GM12878 (cell line): ENCODE measurements at regions of chr9 and their contacts with region 1.

Region 1: GRCh38 chr9:123997665-123998277 is 13.8 kb upstream of the LHX2 start:
- DNase-seq: peak; percentile 81
- ATAC-seq: peak; percentile 79
- H3K4me3 ChIP-seq: peak overlapping the region; percentile 50; the same call in 1 of the 2 replicates
- H3K27ac ChIP-seq: peak overlapping the region; percentile 85
- H3K4me1 ChIP-seq: peaks cover 30% of the 10 kb centered on the region
- H3K27me3 ChIP-seq: peaks cover 0 to 25% of the 10 kb centered on the region in 2 experiments; a peak in 1 of 4 replicates
- CTCF ChIP-seq: no peak
- EP300 ChIP-seq: peak; percentile 24 to 61; a peak in 1 of 4 replicates
- POLR2A ChIP-seq: no peak
- RAD21 ChIP-seq: no peak

Region 2: GRCh38 chr9:123893831-123894460 is 103.8 kb before region 1 on chr9:
- CTCF ChIA-PET with region 1: no interaction called
- POLR2A ChIA-PET with region 1: interaction called, 10 read pairs
- RAD21 ChIA-PET with region 1: interaction called, 3 read pairs
- SMC1A ChIA-PET with region 1: no interaction called
- in situ Hi-C with region 1: no loop called
- intact Hi-C with region 1: no loop called
- DNase-seq: no peak
- ATAC-seq: peak; percentile 44
- H3K4me3 ChIP-seq: no peak overlapping the region
- H3K27ac ChIP-seq: peak overlapping the region; percentile 24; the same call in 1 of the 2 replicates
- H3K4me1 ChIP-seq: peaks cover 41% of the 10 kb centered on the region
- H3K27me3 ChIP-seq: no peaks in the 10 kb centered on the region
- CTCF ChIP-seq: no peak
- EP300 ChIP-seq: 0 out of 4 replicates have a peak, but pooled peaks of 1 of the 2 experiments have one; percentile 9
- POLR2A ChIP-seq: no peak
- RAD21 ChIP-seq: no peak

Region 3: DNA sequence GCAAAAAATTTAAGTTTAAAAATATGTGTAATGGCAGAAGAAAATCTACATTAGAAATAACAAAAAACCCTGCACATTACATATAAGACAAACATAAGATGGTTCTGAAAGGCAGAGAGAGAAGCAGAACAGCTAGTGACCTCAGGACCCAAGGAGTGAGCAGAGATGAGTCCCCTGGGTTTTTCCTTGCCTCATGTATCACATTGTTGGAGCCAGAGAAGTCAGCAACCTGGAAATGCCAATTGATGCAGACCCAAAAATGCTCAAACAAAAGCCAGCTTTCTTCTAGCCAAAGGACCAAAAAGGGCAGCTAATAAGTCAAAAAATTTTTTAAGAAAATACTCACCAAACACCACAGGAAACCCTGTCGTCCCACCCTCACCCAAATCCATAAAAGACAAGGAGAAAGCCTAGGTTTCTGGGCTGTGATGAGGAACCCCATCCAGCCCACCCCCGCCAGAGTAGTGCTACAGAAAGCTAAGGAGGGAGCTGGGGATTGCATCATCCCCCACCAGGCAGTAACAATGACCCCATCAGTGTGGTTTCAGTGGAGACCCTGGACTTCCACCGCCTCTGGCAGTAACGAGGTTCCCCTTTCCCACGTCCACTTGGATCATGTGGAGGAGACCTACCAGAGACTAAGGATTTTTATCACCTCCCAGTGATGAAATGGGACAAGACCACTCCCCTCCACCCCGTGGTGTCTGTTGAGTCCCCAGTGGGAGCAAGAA is 85.4 kb before region 1 on chr9:
- CTCF ChIA-PET with region 1: no interaction called
- POLR2A ChIA-PET with region 1: no interaction called
- RAD21 ChIA-PET with region 1: no interaction called
- SMC1A ChIA-PET with region 1: no interaction called
- in situ Hi-C with region 1: no loop called
- intact Hi-C with region 1: no loop called
- DNase-seq: no peak
- ATAC-seq: no peak
- H3K4me3 ChIP-seq: no peak overlapping the region
- H3K27ac ChIP-seq: no peak overlapping the region
- H3K4me1 ChIP-seq: peaks cover 3% of the 10 kb centered on the region; the same call in 1 of the 2 replicates
- H3K27me3 ChIP-seq: no peaks in the 10 kb centered on the region
- CTCF ChIP-seq: no peak
- EP300 ChIP-seq: no peak
- POLR2A ChIP-seq: no peak
- RAD21 ChIP-seq: no peak

Region 4: DNA sequence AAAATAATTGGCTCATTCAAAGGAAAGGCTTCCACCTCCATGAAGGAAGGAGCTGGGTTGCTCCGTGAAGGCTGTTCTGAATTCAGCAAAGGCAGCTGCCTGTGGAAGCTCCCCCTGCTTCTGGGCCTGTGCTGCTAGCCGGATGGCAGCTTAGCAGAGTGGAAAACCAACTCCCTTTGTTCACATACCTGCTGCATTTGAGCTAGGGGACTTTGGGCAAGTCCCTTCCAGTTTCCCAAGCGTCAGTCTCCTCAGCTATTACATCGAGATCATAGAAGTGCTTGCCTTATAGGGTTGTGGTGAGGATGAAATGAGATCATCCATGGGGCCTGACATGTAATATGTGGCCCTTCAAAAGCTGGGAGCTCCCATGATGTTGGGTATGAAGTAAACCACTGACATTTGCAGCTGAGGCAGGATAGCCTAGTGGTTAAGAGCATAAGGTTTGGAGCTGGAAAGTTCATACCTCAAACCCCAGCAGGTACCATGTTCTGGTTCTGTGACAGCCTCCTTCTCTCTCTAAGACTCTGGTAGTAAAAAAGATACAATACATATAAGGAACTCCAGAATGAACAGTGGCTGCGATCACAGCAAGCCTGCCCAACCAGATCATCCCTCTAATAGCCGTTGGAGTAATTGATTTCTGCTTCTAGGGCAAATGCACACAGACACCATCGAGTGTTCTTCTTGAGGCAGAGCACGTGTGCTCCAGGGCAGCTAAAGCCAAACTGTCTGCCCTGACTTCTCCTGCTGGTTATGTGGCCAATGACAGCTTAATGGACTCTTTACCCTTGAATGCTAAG is 56.8 kb before region 1 on chr9:
- CTCF ChIA-PET with region 1: interaction called, 3 read pairs
- POLR2A ChIA-PET with region 1: interaction called, 13 read pairs
- RAD21 ChIA-PET with region 1: interaction called, 27 read pairs
- SMC1A ChIA-PET with region 1: interaction called, 22 read pairs
- in situ Hi-C with region 1: no loop called
- intact Hi-C with region 1: no loop called
- DNase-seq: peak; percentile 77
- ATAC-seq: peak; percentile 95
- H3K4me3 ChIP-seq: no peak overlapping the region
- H3K27ac ChIP-seq: no peak overlapping the region
- H3K4me1 ChIP-seq: no peaks in the 10 kb centered on the region
- H3K27me3 ChIP-seq: no peaks in the 10 kb centered on the region
- CTCF ChIP-seq: no peak
- EP300 ChIP-seq: peak; percentile 64 to 82; a peak in 2 of 4 replicates
- POLR2A ChIP-seq: no peak
- RAD21 ChIP-seq: no peak

Region 5: DNA sequence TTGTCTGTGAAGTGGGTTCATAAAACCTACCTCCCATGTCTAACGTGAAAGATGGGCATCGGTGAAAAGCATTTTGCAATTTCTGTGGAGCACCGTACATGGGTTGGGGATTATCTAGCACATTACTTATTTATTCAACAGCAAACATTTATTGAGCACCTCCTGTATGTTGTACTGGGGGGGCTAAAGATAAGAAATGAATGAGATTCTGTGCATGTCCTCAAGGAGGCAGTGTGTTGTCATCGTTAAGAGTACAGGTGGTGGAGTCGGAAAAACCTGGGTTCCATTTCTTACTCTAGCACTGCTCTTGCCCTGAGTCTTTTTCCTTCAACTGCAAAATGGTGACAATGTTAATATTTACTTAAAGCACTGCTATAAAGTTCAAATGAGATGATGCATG is 37.4 kb before region 1 on chr9:
- CTCF ChIA-PET with region 1: interaction called, 16 read pairs
- POLR2A ChIA-PET with region 1: no interaction called
- RAD21 ChIA-PET with region 1: interaction called, 20 read pairs
- SMC1A ChIA-PET with region 1: interaction called, 18 read pairs
- in situ Hi-C with region 1: no loop called
- intact Hi-C with region 1: no loop called
- DNase-seq: peak; percentile 21
- ATAC-seq: peak; percentile 79
- H3K4me3 ChIP-seq: no peak overlapping the region
- H3K27ac ChIP-seq: no peak overlapping the region
- H3K4me1 ChIP-seq: no peaks in the 10 kb centered on the region
- H3K27me3 ChIP-seq: peaks cover 3 to 4% of the 10 kb centered on the region in 2 experiments; a peak in 3 of 4 replicates
- CTCF ChIP-seq: peak; percentile 35 to 57 (median 48); a peak in 5 of 6 replicates
- EP300 ChIP-seq: no peak
- POLR2A ChIP-seq: no peak
- RAD21 ChIP-seq: peak; percentile 59

Region 6: GRCh38 chr9:124011420-124012301 is 13.9 kb after region 1 on chr9 and contains the start of gene LHX2:
- CTCF ChIA-PET with region 1: interaction called, 8 read pairs
- POLR2A ChIA-PET with region 1: interaction called, 29 read pairs
- RAD21 ChIA-PET with region 1: interaction called, 52 read pairs
- SMC1A ChIA-PET with region 1: interaction called, 11 read pairs
- in situ Hi-C with region 1: no loop called
- intact Hi-C with region 1: no loop called
- DNase-seq: no peak
- ATAC-seq: peak; percentile 71
- H3K4me3 ChIP-seq: peak within 1 kb of the TSS; percentile 51
- H3K27ac ChIP-seq: no peak within 1 kb of the TSS
- H3K4me1 ChIP-seq: peaks cover 25% of the 10 kb centered on the region
- H3K27me3 ChIP-seq: peaks cover 0 to 65% of the 10 kb centered on the region in 2 experiments; a peak in 3 of 4 replicates
- CTCF ChIP-seq: no peak
- EP300 ChIP-seq: no peak
- POLR2A ChIP-seq: no peak
- RAD21 ChIP-seq: no peak
- polyA plus RNA-seq, gene LHX2: 0.82 to 2.6 TPM

Region 7: DNA sequence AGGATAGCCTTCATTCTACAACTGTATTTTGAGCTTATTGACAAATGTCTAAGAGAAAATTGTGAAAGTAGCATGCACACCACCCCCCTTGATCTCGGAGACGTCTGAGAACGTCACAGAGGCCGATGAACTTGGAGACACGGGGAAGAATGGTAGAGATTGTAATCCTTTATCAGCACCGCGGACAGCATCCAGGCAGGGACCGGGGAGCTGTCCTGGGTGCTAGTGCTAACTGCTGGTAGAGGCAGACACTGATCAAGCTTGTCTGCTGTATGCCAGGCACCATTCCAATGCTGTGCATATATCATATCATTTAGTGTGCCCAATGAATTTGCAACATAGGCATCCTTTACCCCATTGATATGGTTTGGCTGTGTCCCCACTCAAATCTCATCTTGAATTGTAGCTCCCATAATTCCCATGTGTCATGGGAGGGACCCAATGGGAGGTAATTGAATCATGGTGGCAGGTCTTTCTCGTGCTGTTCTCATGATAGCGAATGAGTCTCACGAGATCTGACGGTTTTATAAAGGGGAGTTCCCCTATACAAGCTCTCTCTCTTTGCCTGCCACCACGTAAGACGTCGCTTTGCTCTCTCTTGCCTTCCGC is 112.6 kb after region 1 on chr9:
- CTCF ChIA-PET with region 1: no interaction called
- POLR2A ChIA-PET with region 1: no interaction called
- RAD21 ChIA-PET with region 1: no interaction called
- SMC1A ChIA-PET with region 1: no interaction called
- in situ Hi-C with region 1: no loop called
- intact Hi-C with region 1: no loop called
- DNase-seq: no peak
- ATAC-seq: peak; percentile 74
- H3K4me3 ChIP-seq: no peak overlapping the region
- H3K27ac ChIP-seq: no peak overlapping the region
- H3K4me1 ChIP-seq: no peaks in the 10 kb centered on the region
- H3K27me3 ChIP-seq: no peaks in the 10 kb centered on the region; a peak in 1 of 4 replicates
- CTCF ChIP-seq: no peak
- EP300 ChIP-seq: no peak
- POLR2A ChIP-seq: no peak
- RAD21 ChIP-seq: no peak